ENCODE measurements at regions of chr9 and their contacts with region 1.

Region 1: DNA sequence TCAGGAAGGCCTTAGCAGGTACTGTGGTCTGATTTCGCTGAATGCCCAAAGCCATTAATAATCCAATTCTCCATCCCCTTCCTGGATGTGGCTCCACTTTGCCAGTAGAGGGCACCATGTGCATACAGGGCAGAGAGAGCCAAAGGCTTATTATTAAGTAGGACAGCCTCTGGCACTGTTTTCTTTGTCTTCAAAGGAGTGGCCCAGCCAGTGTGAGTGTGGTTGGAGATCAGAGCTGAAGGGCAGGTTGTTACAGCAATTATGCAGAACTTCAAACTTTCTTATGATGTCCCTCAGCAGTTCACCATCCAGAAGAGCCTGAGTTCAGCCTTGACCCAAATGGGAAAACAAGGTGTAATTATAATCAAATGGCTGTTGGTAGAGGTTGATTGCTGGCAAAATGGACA is 38.6 kb upstream of the CEMIP2 start:
- DNase-seq: peak; percentile 74
- ATAC-seq: peak; percentile 99
- H3K4me3 Mint-ChIP-seq: no peak overlapping the region
- H3K27ac Mint-ChIP-seq: no peak overlapping the region
- H3K4me1 Mint-ChIP-seq: peaks cover 8% of the 10 kb centered on the region
- H3K27me3 Mint-ChIP-seq: no peaks in the 10 kb centered on the region
- CTCF ChIP-seq: peak; percentile 91

Region 2: DNA sequence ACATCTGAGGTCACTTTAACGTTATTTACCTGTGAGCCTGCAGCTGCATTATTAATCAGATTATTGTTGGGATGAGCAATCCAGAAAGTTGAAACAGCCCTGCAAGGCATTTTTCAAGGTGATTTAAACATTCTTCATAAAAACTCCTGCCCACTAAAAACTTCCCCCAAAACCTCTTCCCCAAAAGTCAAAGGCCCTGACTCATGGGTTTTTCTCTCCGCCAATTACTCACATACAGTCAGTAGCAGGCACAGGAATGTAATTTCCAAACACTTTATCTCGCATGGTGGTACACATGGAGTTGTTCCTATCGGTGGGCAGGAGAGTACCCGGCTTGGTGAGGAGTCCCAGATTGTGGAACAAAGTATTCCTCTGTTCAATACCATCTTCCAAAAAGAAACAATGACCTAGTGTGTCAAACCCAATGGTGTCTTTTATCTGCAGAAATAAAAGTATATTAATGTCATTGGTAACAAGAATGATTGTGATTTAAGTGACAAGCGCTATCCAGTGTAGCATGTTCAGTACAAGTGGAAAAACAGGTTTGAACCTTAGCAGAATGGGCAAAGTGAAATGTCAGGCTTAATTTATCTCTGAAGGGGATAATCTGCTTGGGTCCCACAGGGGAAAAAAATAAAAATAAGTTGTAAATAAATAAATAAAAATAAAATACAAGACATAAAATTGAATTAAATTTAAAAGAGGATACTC is 76.9 kb before region 1 on chr9:
- CTCF ChIA-PET with region 1: no interaction called
- POLR2A ChIA-PET with region 1: no interaction called
- intact Hi-C with region 1: no loop called
- DNase-seq: no peak
- ATAC-seq: no peak
- H3K4me3 Mint-ChIP-seq: no peak overlapping the region
- H3K27ac Mint-ChIP-seq: no peak overlapping the region
- H3K4me1 Mint-ChIP-seq: peaks cover 4% of the 10 kb centered on the region
- H3K27me3 Mint-ChIP-seq: no peaks in the 10 kb centered on the region
- CTCF ChIP-seq: no peak

Region 3: DNA sequence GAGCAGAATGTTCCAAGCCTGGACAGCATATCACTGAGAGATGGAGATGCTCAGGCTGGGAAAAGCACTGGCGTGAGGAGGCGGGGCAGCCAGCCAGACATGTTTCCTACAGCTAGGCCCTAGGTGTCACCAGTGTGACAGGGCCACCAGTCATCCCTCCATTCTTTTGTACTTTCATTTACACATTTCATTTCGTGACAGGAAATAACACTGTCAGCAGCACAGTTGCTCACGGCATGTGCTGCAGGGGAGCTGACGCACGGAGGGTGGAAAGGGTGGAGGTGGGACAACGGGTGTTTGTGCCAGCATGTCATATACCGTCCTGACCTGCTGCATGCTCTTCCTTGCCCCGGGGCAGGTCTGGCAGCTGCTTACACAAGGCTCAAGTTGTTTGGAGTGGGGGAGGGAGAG is 23.8 kb before region 1 on chr9:
- CTCF ChIA-PET with region 1: interaction called, 32 read pairs
- POLR2A ChIA-PET with region 1: no interaction called
- intact Hi-C with region 1: no loop called
- DNase-seq: peak; percentile 94
- ATAC-seq: peak; percentile 91
- H3K4me3 Mint-ChIP-seq: peak overlapping the region; percentile 58
- H3K27ac Mint-ChIP-seq: peak overlapping the region; percentile 97
- H3K4me1 Mint-ChIP-seq: peaks cover 51% of the 10 kb centered on the region
- H3K27me3 Mint-ChIP-seq: no peaks in the 10 kb centered on the region
- CTCF ChIP-seq: no peak

Region 4: GRCh38 chr9:71795097-71795813 is 11.6 kb before region 1 on chr9:
- CTCF ChIA-PET with region 1: interaction called, 60 read pairs
- POLR2A ChIA-PET with region 1: interaction called, 4 read pairs
- intact Hi-C with region 1: no loop called
- DNase-seq: no peak
- ATAC-seq: peak; percentile 76
- H3K4me3 Mint-ChIP-seq: peak overlapping the region; percentile 27
- H3K27ac Mint-ChIP-seq: peak overlapping the region; percentile 88
- H3K4me1 Mint-ChIP-seq: peaks cover 63% of the 10 kb centered on the region
- H3K27me3 Mint-ChIP-seq: no peaks in the 10 kb centered on the region
- CTCF ChIP-seq: no peak

Region 5: GRCh38 chr9:71819115-71819739 is 12.3 kb after region 1 on chr9:
- CTCF ChIA-PET with region 1: interaction called, 105 read pairs
- POLR2A ChIA-PET with region 1: no interaction called
- intact Hi-C with region 1: no loop called
- DNase-seq: peak; percentile 61
- ATAC-seq: no peak
- H3K4me3 Mint-ChIP-seq: no peak overlapping the region
- H3K27ac Mint-ChIP-seq: no peak overlapping the region
- H3K4me1 Mint-ChIP-seq: peaks cover 16% of the 10 kb centered on the region
- H3K27me3 Mint-ChIP-seq: no peaks in the 10 kb centered on the region
- CTCF ChIP-seq: peak; percentile 91

Region 6: DNA sequence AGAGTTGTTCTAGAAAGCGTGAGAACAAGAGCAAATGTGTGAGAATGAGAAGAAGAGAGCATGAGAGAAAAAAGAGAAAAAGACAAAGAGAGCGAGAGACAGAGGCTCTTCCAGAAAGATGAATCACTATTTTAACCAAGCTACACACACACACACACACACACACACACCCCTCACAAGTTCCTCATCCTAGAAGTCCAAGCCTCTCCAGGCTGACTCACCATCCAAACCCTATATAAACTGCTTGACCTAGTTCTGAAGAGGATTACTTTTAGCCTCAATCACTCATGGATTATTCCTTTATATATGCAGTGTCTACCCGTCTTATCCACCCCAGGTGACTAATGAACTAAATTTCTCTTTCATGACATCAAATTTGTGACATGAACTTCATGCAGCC is 215.9 kb after region 1 on chr9:
- CTCF ChIA-PET with region 1: interaction called, 177 read pairs
- POLR2A ChIA-PET with region 1: no interaction called
- intact Hi-C with region 1: loop called (anchors 1 kb)
- DNase-seq: no peak
- ATAC-seq: no peak
- H3K4me3 Mint-ChIP-seq: no peak overlapping the region
- H3K27ac Mint-ChIP-seq: no peak overlapping the region
- H3K4me1 Mint-ChIP-seq: no peaks in the 10 kb centered on the region
- H3K27me3 Mint-ChIP-seq: no peaks in the 10 kb centered on the region
- CTCF ChIP-seq: no peak

Region 7: GRCh38 chr9:72038890-72039410 is 232.0 kb after region 1 on chr9:
- CTCF ChIA-PET with region 1: interaction called, 15 read pairs
- POLR2A ChIA-PET with region 1: no interaction called
- intact Hi-C with region 1: no loop called
- DNase-seq: peak; percentile 75
- ATAC-seq: peak; percentile 92
- H3K4me3 Mint-ChIP-seq: no peak overlapping the region
- H3K27ac Mint-ChIP-seq: no peak overlapping the region
- H3K4me1 Mint-ChIP-seq: no peaks in the 10 kb centered on the region
- H3K27me3 Mint-ChIP-seq: peaks cover 5% of the 10 kb centered on the region
- CTCF ChIP-seq: peak; percentile 91

Region 8: GRCh38 chr9:72271613-72272478 is 464.9 kb after region 1 on chr9:
- CTCF ChIA-PET with region 1: no interaction called
- POLR2A ChIA-PET with region 1: no interaction called
- intact Hi-C with region 1: loop called (anchors 10 kb)
- DNase-seq: peak; percentile 67
- ATAC-seq: peak; percentile 65
- H3K4me3 Mint-ChIP-seq: no peak overlapping the region
- H3K27ac Mint-ChIP-seq: no peak overlapping the region
- H3K4me1 Mint-ChIP-seq: no peaks in the 10 kb centered on the region
- H3K27me3 Mint-ChIP-seq: no peaks in the 10 kb centered on the region
- CTCF ChIP-seq: peak; percentile 85